ENCODE measurements at regions of chrX and their contacts with region 1.

Region 1: DNA sequence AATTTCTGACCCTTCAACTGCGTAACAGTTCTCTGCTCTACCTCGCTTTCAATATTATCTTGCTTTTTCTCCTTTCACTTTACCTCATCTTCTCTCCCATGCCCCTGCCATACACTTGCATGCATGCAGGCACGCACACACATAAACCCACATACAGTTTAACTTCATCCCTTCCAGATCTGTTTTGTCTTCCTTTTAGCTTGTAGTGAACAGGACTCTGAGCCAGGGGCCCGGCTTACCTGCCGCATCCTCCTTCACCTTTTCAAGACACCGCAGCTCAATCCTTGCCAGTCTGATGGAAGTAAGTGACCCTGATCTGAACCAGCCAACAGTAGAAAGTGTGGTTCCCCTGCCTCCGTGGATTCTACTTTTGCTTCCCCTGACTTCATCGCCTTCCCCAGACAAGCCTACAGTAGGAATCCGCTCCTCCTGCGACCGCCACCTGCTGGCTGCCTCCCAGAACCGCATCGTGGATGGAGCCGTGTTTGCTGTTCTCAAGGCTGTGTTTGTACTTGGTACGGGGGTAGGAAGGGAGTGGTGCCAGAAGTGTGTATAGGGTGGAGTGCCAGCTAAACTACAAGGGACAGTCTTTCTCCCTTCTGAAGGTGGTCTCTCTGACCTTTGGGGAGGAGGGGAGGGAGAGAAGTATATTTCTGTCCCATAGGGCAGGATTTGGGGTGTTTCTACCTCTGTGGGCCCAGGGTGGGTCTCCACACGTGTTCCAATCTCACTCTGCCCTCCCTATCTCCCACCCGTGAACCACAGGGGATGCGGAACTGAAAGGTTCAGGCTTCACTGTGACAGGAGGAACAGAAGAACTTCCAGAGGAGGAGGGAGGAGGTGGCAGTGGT is 10.7 kb downstream of the MED12 start:
- DNase-seq: peak; percentile 35
- ATAC-seq: peak; percentile 94
- H3K4me3 ChIP-seq: no peak overlapping the region
- H3K27ac ChIP-seq: no peak overlapping the region
- H3K4me1 ChIP-seq: peaks cover 7% of the 10 kb centered on the region; the same call in 1 of the 2 replicates
- H3K27me3 ChIP-seq: no peaks in the 10 kb centered on the region
- CTCF ChIP-seq: peak; percentile 89
- EP300 ChIP-seq: no peak
- POLR2A ChIP-seq: no peak
- RAD21 ChIP-seq: peak; percentile 59; the same call in 1 of the 2 replicates

Region 2: GRCh38 chrX:70998411-70999027 is 130.6 kb before region 1 on chrX:
- CTCF ChIA-PET with region 1: interaction called, 9 read pairs
- POLR2A ChIA-PET with region 1: no interaction called
- in situ Hi-C with region 1: no loop called
- intact Hi-C with region 1: loop called (anchors 1 kb)
- DNase-seq: peak; percentile 37
- ATAC-seq: peak; percentile 55
- H3K4me3 ChIP-seq: no peak overlapping the region
- H3K27ac ChIP-seq: no peak overlapping the region
- H3K4me1 ChIP-seq: no peaks in the 10 kb centered on the region
- H3K27me3 ChIP-seq: no peaks in the 10 kb centered on the region
- CTCF ChIP-seq: peak; percentile 76
- EP300 ChIP-seq: no peak
- POLR2A ChIP-seq: no peak
- RAD21 ChIP-seq: no peak

Region 3: DNA sequence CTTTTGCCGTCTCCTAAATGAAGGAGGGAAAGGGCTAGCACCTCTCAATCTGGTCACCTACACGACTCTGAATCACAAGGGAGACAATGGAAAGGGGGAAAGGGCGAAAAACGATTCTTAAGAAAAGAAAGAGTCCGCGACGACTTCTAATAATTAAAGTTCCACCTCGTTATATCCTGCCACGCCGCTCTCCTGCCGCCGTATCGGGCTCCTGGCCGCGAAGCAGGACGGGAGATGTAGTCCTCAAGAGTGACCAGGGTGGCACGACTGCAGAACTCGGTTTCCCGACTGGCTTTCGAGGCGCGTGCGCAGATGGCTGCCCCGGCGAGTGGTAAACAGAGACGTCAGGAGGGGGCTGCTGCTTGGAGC is 33.6 kb before region 1 on chrX and contains the start of gene FOXO4:
- CTCF ChIA-PET with region 1: interaction called, 13 read pairs
- POLR2A ChIA-PET with region 1: no interaction called
- in situ Hi-C with region 1: no loop called
- intact Hi-C with region 1: loop called (anchors 1 kb)
- DNase-seq: peak; percentile 75
- ATAC-seq: peak; percentile 93
- H3K4me3 ChIP-seq: peak within 1 kb of the TSS; percentile 66 to 75 (median 73)
- H3K27ac ChIP-seq: peak within 1 kb of the TSS; percentile 45
- H3K4me1 ChIP-seq: peaks cover 29% of the 10 kb centered on the region
- H3K27me3 ChIP-seq: no peaks in the 10 kb centered on the region; a peak in 1 of 5 replicates
- CTCF ChIP-seq: no peak
- EP300 ChIP-seq: no peak
- POLR2A ChIP-seq: peak in 1 of 2 experiments; percentile 56; a peak in 2 of 4 replicates
- RAD21 ChIP-seq: no peak
- total RNA-seq, gene FOXO4: 4.6 and 5.7 TPM in 2 replicates

Measured in HepG2 (cell line).